T-cell (primary cell): ENCODE measurements at regions of chr2 and their contacts with region 1.

Region 1: DNA sequence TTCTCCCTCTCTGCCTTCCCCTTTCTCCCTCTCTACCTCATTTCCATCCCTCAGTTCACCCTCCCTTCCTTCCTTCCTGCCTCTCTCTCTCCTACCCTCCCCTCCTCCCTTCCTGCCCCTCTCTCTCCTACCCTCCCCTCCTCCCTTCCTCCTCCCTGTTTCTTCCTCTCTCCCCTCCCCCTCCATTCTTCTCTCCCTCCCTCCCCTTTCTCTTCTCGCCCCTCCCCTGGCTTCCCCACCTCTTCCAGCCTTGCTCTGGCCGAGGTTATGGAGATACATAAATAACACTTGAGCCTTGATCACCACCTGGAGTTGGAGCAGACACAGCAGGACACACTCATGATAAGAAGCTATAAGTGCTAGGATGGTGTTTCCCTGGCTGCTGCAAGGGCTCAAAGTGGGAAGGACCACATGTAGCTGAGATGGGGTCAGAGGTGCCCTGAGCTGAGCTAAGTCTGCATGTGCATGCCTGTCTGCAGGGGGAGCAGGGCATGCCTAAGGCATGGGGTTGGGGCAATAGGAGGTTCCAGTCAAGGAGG is 326.1 kb upstream of the HS6ST1 start:
- DNase-seq: peak in 1 of 35 experiments; percentile 3
- ATAC-seq: no peak
- H3K4me3 ChIP-seq: no peak overlapping the region
- H3K4me3 Mint-ChIP-seq: no peak overlapping the region
- H3K27ac ChIP-seq: no peak overlapping the region
- H3K27ac Mint-ChIP-seq: no peak overlapping the region
- H3K4me1 ChIP-seq: no peaks in the 10 kb centered on the region
- H3K4me1 Mint-ChIP-seq: no peaks in the 10 kb centered on the region
- H3K27me3 ChIP-seq: peaks cover 0 to 5% of the 10 kb centered on the region in 2 experiments
- H3K27me3 Mint-ChIP-seq: peaks cover 0 to 2% of the 10 kb centered on the region in 2 donors

Region 2: GRCh38 chr2:128485761-128486639 is 158.8 kb before region 1 on chr2:
- CTCF ChIA-PET with region 1: no interaction called
- POLR2A ChIA-PET with region 1: interaction called in 1 of 2 experiments, 11 read pairs
- DNase-seq: no peak
- ATAC-seq: no peak
- H3K4me3 ChIP-seq: no peak overlapping the region
- H3K4me3 Mint-ChIP-seq: no peak overlapping the region
- H3K27ac ChIP-seq: no peak overlapping the region
- H3K27ac Mint-ChIP-seq: no peak overlapping the region
- H3K4me1 ChIP-seq: no peaks in the 10 kb centered on the region
- H3K4me1 Mint-ChIP-seq: no peaks in the 10 kb centered on the region
- H3K27me3 ChIP-seq: peaks cover 0 to 13% of the 10 kb centered on the region in 2 experiments
- H3K27me3 Mint-ChIP-seq: peaks cover 0 to 5% of the 10 kb centered on the region in 2 donors